ENCODE measurements at regions of chr4 and their contacts with region 1.

Region 1: GRCh38 chr4:147866532-147867271 is 134.8 kb downstream of the ARHGAP10 start:
- DNase-seq: peak; percentile 69
- ATAC-seq: peak; percentile 99
- H3K4me3 ChIP-seq: no peak overlapping the region
- H3K27ac ChIP-seq: no peak overlapping the region
- H3K4me1 ChIP-seq: no peaks in the 10 kb centered on the region
- H3K27me3 ChIP-seq: no peaks in the 10 kb centered on the region
- CTCF ChIP-seq: peak; percentile 92

Region 2: DNA sequence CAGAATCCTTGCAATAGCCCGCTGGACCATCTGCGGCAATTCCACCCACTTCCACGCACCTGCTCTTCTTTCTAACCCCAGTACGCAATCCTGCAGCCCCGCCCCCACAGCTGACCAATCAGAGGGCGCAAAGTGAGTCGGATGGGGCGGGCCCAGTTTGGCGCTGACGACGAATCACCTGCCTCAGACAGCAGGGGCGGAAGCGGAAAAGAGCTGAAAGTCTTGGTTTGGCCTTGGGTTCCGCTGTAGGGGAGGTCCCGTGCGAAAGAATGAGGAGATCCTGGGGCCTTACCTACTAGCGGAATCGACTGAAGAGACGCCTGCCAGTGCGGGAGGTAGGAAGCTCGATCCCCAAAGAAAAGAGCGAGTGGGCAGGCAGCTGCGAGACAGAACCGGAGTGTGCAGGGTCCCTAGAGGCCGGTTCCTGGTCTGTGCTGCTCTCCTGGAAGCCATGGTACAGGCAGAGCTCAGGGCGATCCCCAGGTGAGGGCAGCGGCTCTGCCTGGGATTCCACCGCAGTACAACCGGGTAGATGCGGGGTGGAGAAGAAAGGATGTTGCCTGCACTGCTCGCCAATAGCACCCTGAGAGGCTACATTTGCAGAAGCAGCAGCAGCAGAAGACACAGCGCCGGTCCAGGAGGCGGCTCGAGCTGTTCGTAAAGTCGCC is 249.4 kb before region 1 on chr4 and contains the start of gene TMEM184C:
- CTCF ChIA-PET with region 1: no interaction called
- POLR2A ChIA-PET with region 1: no interaction called
- in situ Hi-C with region 1: no loop called
- intact Hi-C with region 1: loop called (anchors 10 kb)
- DNase-seq: peak; percentile 69
- ATAC-seq: peak; percentile 100
- H3K4me3 ChIP-seq: peak within 1 kb of the TSS; percentile 89 to 95
- H3K27ac ChIP-seq: peak within 1 kb of the TSS; percentile 72
- H3K4me1 ChIP-seq: no peaks in the 10 kb centered on the region; the same call in 1 of the 2 replicates
- H3K27me3 ChIP-seq: no peaks in the 10 kb centered on the region
- CTCF ChIP-seq: no peak
- total RNA-seq, gene TMEM184C: 26.5 TPM

Region 3: GRCh38 chr4:147693218-147693617 is 173.5 kb before region 1 on chr4:
- CTCF ChIA-PET with region 1: interaction called, 5 read pairs
- POLR2A ChIA-PET with region 1: no interaction called
- in situ Hi-C with region 1: no loop called
- intact Hi-C with region 1: loop called (anchors 5 kb)
- DNase-seq: no peak
- ATAC-seq: no peak
- H3K4me3 ChIP-seq: no peak overlapping the region
- H3K27ac ChIP-seq: no peak overlapping the region
- H3K4me1 ChIP-seq: no peaks in the 10 kb centered on the region
- H3K27me3 ChIP-seq: no peaks in the 10 kb centered on the region
- CTCF ChIP-seq: no peak

Region 4: DNA sequence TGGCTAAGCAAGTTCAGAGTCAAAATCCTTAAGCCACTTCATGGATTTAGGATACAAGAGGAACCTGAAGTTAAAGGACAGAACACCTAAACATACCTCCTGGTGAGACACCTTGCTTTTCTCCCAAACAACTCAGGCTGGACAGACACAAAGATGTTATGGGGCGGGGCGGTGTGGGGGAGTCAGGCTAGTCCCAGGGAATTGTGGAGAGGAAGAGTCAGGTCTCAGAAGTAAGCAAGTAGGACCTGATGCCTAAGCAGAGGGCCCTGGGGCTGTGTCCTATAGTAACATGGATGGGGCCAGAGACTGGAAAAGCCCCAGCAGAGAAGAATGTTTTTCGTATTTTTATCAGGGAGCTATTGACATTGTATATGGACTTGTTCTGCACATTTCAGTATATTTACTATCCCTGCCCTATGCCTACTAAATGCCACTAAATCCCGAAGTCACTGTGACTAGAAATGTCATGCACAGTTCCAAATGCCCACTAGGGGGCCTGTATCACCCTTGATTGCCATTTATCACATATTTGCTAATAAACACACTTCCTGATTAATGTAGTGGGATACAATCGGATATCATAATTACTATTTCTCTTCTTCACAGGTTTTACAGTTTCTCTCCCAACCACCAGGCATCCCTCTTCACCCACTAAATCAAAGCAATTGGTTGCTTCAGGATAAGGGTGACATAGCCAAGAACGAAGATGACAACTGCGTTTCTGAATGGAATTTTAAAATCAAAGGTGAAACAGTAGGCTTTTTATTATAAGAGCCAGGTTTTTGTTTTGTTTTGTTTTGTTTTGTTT is 158.6 kb before region 1 on chr4:
- CTCF ChIA-PET with region 1: interaction called, 7 read pairs
- POLR2A ChIA-PET with region 1: no interaction called
- in situ Hi-C with region 1: no loop called
- intact Hi-C with region 1: loop called (anchors 1 kb)
- DNase-seq: peak; percentile 52
- ATAC-seq: peak; percentile 81
- H3K4me3 ChIP-seq: no peak overlapping the region
- H3K27ac ChIP-seq: no peak overlapping the region
- H3K4me1 ChIP-seq: no peaks in the 10 kb centered on the region
- H3K27me3 ChIP-seq: no peaks in the 10 kb centered on the region
- CTCF ChIP-seq: peak; percentile 78

Region 5: DNA sequence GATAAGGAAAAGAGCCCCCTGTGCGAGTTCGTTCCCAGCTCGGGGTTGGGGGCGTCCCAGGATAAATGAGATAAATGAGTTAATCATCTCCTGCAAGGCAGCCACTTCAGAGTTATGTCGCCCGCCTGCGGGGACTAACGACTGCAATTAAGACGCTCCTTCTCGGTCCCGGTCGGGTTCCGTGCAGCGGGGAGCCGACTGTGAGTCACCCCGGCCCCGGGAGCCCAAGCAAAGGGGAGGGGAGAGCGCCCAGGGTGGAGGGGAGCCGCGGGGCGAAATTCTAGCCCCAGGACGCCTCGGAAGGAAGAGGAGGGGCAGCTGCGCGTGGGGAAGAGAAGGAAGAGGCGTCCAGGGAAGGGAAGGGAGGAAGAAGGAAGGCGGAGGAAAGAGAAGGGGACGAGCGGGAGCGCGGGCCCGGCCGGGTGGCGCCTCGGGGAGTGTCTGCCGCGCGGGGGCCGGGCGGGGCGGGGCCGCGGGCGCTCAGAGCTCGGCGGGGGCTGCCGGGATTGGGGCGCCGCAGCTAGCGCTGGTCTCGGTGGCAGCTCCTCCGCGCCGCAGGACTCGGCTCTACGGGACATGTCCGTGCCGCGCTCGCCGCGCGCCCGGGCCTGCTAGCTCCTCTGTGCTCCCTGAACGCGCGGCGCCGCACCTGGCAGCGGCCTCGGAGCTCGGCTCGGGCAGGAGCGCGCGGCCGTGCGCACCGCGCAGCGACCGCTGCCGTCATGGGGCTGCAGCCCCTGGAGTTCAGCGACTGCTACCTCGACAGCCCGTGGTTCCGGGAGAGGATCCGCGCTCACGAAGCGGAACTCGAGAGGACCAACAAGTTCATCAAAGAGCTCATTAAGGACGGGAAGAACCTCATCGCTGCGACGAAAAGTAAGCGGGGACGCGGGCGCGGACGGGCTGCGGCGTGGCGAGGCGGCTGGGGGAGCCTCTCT is 134.9 kb before region 1 on chr4 and contains the start of gene ARHGAP10:
- CTCF ChIA-PET with region 1: interaction called, 10 read pairs
- POLR2A ChIA-PET with region 1: no interaction called
- in situ Hi-C with region 1: no loop called
- intact Hi-C with region 1: no loop called
- DNase-seq: no peak
- ATAC-seq: peak; percentile 91
- H3K4me3 ChIP-seq: peak within 1 kb of the TSS; percentile 71 to 88
- H3K27ac ChIP-seq: peak within 1 kb of the TSS; percentile 83
- H3K4me1 ChIP-seq: peaks cover 20% of the 10 kb centered on the region
- H3K27me3 ChIP-seq: no peaks in the 10 kb centered on the region
- CTCF ChIP-seq: no peak
- total RNA-seq, gene ARHGAP10: 11.7 TPM

Measured in Panc1 (cell line).